OCI-LY7 (cell line): ENCODE measurements at regions of chrX and their contacts with region 1.

Region 1: DNA sequence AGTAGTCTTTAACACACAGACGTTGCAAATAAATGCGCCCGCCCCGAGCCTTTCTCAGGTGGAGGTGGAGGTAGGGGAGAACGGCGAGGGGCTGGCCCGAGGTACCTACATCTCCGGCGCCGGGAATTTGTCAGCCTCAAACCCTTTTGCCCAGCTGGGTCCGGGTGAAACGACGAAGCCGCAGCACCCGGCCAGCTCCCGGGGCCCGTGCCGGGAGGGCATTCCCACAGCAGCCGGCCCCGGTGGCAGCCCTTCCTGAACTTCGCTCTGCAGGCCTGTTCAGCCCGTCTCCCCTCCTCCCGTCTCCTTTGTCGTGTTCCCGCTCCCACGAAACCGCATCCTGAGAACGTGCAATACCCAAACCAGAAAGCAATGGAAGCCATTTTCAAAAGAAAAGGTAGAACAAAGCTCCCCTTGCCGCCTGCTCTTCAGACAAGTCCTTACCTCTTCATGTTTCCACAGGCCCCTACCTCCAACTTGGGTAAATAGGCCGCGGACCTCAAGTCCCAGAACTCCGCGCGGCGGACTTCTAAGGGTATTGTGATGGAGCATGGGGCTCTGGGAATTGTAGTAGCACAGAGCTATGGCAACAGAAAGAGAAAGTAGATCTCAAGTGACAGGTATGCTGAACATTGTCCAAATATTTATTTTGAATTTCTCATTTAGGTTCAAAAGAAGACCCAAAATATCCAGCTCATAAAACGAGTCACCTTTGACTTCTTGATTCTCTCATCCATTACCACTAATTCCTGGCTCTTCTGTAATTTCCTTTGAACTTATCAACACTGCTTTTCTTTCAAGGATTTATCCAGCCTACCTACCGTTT is at the start of gene RBM41:
- DNase-seq: peak; percentile 84
- H3K4me3 ChIP-seq: peak within 1 kb of the TSS; percentile 88
- H3K27ac ChIP-seq: peak within 1 kb of the TSS; percentile 34
- H3K4me1 ChIP-seq: peaks cover 9% of the 10 kb centered on the region
- CTCF ChIP-seq: no peak
- total RNA-seq, gene RBM41: 14.6 and 23.9 TPM in 2 replicates

Region 2: GRCh38 chrX:107205770-107206696 is 87.5 kb after region 1 on chrX and contains the starts of genes DNAAF6 and NUP62CL:
- CTCF ChIA-PET with region 1: no interaction called
- POLR2A ChIA-PET with region 1: no interaction called
- intact Hi-C with region 1: loop called (anchors 5 kb)
- DNase-seq: peak; percentile 86
- H3K4me3 ChIP-seq: peak within 1 kb of the TSS; percentile 86
- H3K27ac ChIP-seq: peak within 1 kb of the TSS; percentile 62
- H3K4me1 ChIP-seq: no peaks in the 10 kb centered on the region
- CTCF ChIP-seq: no peak
- total RNA-seq, gene DNAAF6: not detected in 2 replicates
- total RNA-seq, gene NUP62CL: 23.4 and 37.6 TPM in 2 replicates

Region 3: GRCh38 chrX:107429090-107429489 is 310.6 kb after region 1 on chrX:
- CTCF ChIA-PET with region 1: no interaction called
- POLR2A ChIA-PET with region 1: no interaction called
- intact Hi-C with region 1: no loop called
- DNase-seq: peak; percentile 53
- H3K4me3 ChIP-seq: no peak overlapping the region
- H3K27ac ChIP-seq: no peak overlapping the region
- H3K4me1 ChIP-seq: no peaks in the 10 kb centered on the region
- CTCF ChIP-seq: peak; percentile 64